Left lung (tissue), 14 donors: ENCODE measurements at regions of chr5 and their contacts with region 1.

Region 1: DNA sequence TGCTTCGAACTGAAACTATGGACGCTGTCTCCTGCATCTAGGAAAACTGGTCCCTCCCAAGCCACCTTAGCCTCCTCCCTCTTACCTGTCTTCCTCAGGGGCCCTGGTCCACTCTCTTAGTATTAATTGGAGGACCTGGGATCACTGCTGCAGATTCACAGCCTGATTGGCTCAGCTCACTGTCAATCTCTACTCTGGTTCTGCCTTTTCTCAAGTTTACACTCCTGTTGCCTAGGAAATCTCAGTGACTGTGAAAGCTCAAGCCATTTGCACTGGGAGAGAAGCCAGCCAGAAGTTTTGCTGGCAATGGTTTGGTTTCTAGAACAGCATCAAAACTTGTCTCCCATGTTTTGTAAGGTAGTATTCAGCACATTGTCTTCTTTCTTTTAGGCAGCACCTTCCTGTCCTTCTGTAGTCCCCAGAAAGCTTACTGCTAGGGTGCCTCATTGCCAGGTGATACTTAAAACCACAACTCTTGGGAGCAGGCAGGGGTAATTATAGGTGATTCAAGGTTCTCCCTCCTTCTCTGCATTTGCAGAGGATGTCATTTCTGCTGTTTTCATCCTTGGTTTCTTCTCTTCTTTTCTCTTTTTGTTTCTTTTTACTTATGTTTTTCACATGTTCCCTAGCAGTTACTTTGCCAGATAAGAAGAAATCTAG is at the start of gene CAPSL:
- DNase-seq: peak in 3 of 4 donors; percentile 41 to 95 (median 92)
- ATAC-seq: peak; percentile 88
- H3K4me3 ChIP-seq: no peak within 1 kb of the TSS
- H3K27ac ChIP-seq: no peak within 1 kb of the TSS
- H3K4me1 ChIP-seq: peaks cover 0 to 3% of the 10 kb centered on the region in 2 donors
- H3K27me3 ChIP-seq: no peaks in the 10 kb centered on the region
- CTCF ChIP-seq: no peak
- polyA plus RNA-seq, gene CAPSL: 2.0 to 12.0 (median 6.4) TPM

Region 2: DNA sequence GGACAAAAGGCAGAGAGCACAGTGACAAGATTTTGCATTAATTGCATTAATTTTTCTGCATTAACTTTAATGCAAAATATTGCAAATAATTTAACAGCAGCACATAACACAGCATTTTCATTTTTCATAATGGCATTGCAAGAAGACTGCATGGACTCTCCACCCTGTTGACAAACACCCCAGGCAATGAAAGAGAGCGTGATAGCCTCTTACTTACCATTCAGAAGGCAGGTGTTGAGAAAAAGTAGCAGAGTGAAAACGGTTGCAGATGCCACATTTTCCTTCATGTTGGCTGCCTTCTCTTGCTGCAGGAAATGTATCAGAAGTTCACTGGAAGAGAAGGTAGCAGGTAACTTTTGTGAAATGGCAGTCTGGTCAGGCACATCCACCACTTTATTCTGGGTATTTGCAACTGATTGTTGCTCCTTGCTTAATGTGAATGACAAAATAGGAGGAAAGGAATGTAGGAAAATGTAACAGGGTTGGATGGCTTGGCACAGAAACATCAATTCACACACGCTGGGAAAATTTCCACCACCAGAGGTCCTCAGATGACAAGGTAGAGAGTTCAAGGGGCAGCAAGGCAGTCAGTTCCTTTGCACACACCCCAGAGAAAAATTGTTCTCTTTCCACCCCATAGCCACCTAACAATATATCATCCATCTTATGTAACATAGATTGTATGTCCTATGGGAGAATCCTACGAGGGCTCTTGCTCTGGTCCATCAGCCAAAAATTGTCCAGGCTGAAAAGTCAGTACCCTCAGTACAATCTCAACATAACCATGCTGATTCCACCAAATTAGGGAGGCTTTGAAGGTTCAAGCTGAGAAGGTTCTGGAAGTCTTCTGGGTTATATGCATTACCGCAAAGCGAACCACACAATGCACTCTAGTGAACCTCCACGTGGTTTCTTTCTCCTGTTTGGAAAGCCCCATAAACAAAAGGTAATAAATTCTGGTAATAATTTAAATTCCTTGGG is 849.1 kb before region 1 on chr5:
- intact Hi-C with region 1: loop called in 1 of 2 experiments (anchors 10 kb)
- DNase-seq: peak in 3 of 4 donors; percentile 36 to 51 (median 40)
- ATAC-seq: peak; percentile 81
- H3K4me3 ChIP-seq: no peak overlapping the region
- H3K27ac ChIP-seq: no peak overlapping the region
- H3K4me1 ChIP-seq: no peaks in the 10 kb centered on the region
- H3K27me3 ChIP-seq: no peaks in the 10 kb centered on the region
- CTCF ChIP-seq: peak; percentile 55 to 65

Region 3: GRCh38 chr5:35608881-35609779 is 329.6 kb before region 1 on chr5:
- intact Hi-C with region 1: no loop called
- DNase-seq: no peak
- ATAC-seq: no peak
- H3K4me3 ChIP-seq: no peak overlapping the region
- H3K27ac ChIP-seq: no peak overlapping the region
- H3K4me1 ChIP-seq: no peaks in the 10 kb centered on the region
- H3K27me3 ChIP-seq: no peaks in the 10 kb centered on the region
- CTCF ChIP-seq: no peak

Region 4: GRCh38 chr5:35838370-35839042 is 100.2 kb before region 1 on chr5:
- intact Hi-C with region 1: no loop called
- DNase-seq: no peak
- ATAC-seq: no peak
- H3K4me3 ChIP-seq: no peak overlapping the region
- H3K27ac ChIP-seq: no peak overlapping the region
- H3K4me1 ChIP-seq: no peaks in the 10 kb centered on the region
- H3K27me3 ChIP-seq: no peaks in the 10 kb centered on the region
- CTCF ChIP-seq: no peak